HepG2 (cell line): ENCODE measurements at regions of chr2 and their contacts with region 1.

Region 1: DNA sequence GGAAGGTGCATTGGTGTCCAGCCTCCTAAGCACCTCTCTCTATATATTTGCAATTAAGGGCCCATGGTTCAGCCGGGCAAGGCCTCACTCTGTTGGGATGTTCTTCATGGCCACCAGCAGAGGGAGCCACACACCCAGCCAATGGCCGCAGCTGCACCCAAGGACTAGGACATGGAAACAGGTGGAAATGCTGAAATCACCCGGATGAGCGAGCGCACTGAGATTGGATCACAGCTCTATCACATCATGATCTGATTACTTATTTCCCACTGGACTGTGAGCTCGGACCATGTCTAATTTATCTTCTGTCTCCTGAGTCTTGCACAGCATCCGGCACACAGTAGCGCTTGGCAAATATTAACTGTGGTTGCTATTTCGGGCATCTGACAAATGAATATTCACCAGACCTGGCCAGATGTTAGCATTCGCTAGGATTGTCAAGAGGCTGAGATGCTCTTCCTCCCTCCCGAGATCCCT is 31.2 kb downstream of the KIF3C start:
- DNase-seq: peak; percentile 83
- ATAC-seq: peak; percentile 85
- H3K4me3 ChIP-seq: peak overlapping the region in 1 of 3 experiments; percentile 14; a peak in 1 of 6 replicates
- H3K27ac ChIP-seq: no peak overlapping the region
- H3K4me1 ChIP-seq: peaks cover 39% of the 10 kb centered on the region
- H3K27me3 ChIP-seq: no peaks in the 10 kb centered on the region
- CTCF ChIP-seq: peak; percentile 98
- EP300 ChIP-seq: 0 out of 4 replicates have a peak, but pooled peaks of 1 of the 2 experiments have one; percentile 15
- POLR2A ChIP-seq: no peak
- RAD21 ChIP-seq: peak; percentile 98

Region 2: GRCh38 chr2:25445464-25445863 is 505.6 kb before region 1 on chr2:
- CTCF ChIA-PET with region 1: no interaction called
- POLR2A ChIA-PET with region 1: no interaction called
- in situ Hi-C with region 1: no loop called
- intact Hi-C with region 1: no loop called
- DNase-seq: peak; percentile 10
- ATAC-seq: no peak
- H3K4me3 ChIP-seq: no peak overlapping the region
- H3K27ac ChIP-seq: no peak overlapping the region
- H3K4me1 ChIP-seq: 0 out of 2 replicates have a peak, but pooled peaks cover 4% of the 10 kb centered on the region
- H3K27me3 ChIP-seq: no peaks in the 10 kb centered on the region
- CTCF ChIP-seq: no peak
- EP300 ChIP-seq: no peak
- POLR2A ChIP-seq: no peak
- RAD21 ChIP-seq: no peak

Region 3: GRCh38 chr2:25851740-25852503 is 99.2 kb before region 1 on chr2:
- CTCF ChIA-PET with region 1: interaction called, 12 read pairs
- POLR2A ChIA-PET with region 1: no interaction called
- in situ Hi-C with region 1: no loop called
- intact Hi-C with region 1: loop called (anchors 1 kb)
- DNase-seq: peak; percentile 86
- ATAC-seq: peak; percentile 92
- H3K4me3 ChIP-seq: no peak overlapping the region; a peak in 1 of 6 replicates
- H3K27ac ChIP-seq: peak overlapping the region; percentile 50
- H3K4me1 ChIP-seq: peaks cover 21% of the 10 kb centered on the region
- H3K27me3 ChIP-seq: no peaks in the 10 kb centered on the region
- CTCF ChIP-seq: peak; percentile 87
- EP300 ChIP-seq: peak in 1 of 2 experiments; percentile 35; a peak in 1 of 4 replicates
- POLR2A ChIP-seq: no peak
- RAD21 ChIP-seq: peak; percentile 85

Region 4: DNA sequence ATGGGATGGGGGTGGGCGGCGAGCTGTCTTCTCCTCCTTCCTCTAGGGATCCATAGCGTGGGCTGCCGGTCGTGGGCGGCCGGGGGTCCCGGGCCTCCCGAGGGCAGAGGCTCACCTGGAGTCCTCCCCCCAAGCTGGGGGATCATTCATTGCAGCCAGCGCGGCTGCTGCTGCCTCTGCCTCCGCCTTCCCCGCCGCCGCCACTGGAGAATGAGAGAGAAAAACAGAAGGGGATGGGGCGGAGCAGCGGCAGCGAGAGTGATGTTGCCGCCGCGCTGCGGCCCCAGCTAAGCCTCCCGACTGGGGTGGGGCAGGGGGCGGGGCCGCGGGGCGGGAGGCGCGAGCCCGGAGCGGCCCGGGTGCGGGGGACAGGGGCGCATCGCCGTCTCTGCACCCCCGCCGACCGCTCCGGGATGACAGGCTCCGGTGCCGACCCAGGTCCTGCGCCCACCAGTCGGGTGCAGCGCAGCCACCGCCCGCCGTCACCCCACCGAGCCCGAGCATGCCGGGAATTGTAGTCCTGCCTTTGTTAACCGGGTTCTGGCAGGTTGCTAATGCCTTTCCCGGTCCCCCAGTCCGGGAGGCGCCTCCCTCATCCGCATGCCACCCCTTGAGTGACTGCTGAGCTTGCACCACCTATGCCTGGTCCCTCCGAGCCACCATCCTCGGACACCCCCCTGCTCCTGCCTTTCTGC is 31.3 kb after region 1 on chr2 and contains the start of gene KIF3C:
- CTCF ChIA-PET with region 1: no interaction called
- POLR2A ChIA-PET with region 1: interaction called, 7 read pairs
- in situ Hi-C with region 1: no loop called
- intact Hi-C with region 1: loop called (anchors 2 kb)
- DNase-seq: peak; percentile 66
- ATAC-seq: peak; percentile 86
- H3K4me3 ChIP-seq: peak within 1 kb of the TSS; percentile 80 to 90 (median 86)
- H3K27ac ChIP-seq: no peak within 1 kb of the TSS
- H3K4me1 ChIP-seq: peaks cover 49% of the 10 kb centered on the region
- H3K27me3 ChIP-seq: no peaks in the 10 kb centered on the region
- CTCF ChIP-seq: peak; percentile 19; the same call in 1 of the 2 replicates
- EP300 ChIP-seq: no peak
- POLR2A ChIP-seq: no peak
- RAD21 ChIP-seq: no peak
- total RNA-seq, gene KIF3C: 3.4 and 3.6 TPM in 2 replicates

Region 5: DNA sequence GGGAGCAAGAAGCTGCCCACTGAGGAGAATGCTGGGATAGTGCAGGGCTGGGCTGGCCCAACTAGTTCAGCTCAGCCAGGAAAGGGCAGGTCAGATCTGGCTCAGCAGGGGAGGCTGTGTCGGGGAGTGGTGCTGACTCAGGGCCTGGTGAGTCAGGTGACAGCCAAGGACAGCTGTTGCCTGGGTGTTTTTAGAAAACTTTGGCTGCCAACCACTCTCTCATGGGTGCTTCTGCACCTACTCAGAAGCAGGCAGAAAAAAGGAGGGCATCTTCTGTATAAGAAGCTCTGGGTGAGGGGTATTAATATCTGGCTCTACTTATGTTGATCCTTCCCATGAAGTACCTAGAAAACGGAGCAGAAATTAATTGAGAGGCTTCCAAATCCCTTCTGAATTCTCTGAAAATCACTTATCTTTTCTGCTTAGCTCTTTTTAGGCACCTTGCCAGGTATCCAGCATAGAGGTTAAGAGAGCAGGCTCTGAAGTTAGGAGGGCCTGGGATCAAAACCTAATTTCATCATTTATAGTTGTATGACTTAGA is 67.1 kb after region 1 on chr2:
- CTCF ChIA-PET with region 1: no interaction called
- POLR2A ChIA-PET with region 1: no interaction called
- in situ Hi-C with region 1: no loop called
- intact Hi-C with region 1: loop called (anchors 2 kb)
- DNase-seq: peak; percentile 48
- ATAC-seq: peak; percentile 94
- H3K4me3 ChIP-seq: no peak overlapping the region
- H3K27ac ChIP-seq: no peak overlapping the region
- H3K4me1 ChIP-seq: peaks cover 35% of the 10 kb centered on the region
- H3K27me3 ChIP-seq: peaks cover 2 to 16% of the 10 kb centered on the region in 2 experiments; a peak in 2 of 5 replicates
- CTCF ChIP-seq: no peak
- EP300 ChIP-seq: no peak
- POLR2A ChIP-seq: no peak
- RAD21 ChIP-seq: no peak